T-cell (primary cell): ENCODE measurements at regions of chr4 and their contacts with region 1.

Region 1: GRCh38 chr4:150680651-150681050 is 98.7 kb downstream of the MAB21L2 start:
- DNase-seq: no peak
- ATAC-seq: no peak
- H3K4me3 ChIP-seq: no peak overlapping the region
- H3K4me3 Mint-ChIP-seq: no peak overlapping the region
- H3K27ac ChIP-seq: no peak overlapping the region
- H3K27ac Mint-ChIP-seq: no peak overlapping the region
- H3K4me1 ChIP-seq: no peaks in the 10 kb centered on the region
- H3K4me1 Mint-ChIP-seq: peaks cover 2 to 6% (median 2%) of the 10 kb centered on the region in 3 donors
- H3K27me3 ChIP-seq: no peaks in the 10 kb centered on the region
- H3K27me3 Mint-ChIP-seq: no peaks in the 10 kb centered on the region

Region 2: DNA sequence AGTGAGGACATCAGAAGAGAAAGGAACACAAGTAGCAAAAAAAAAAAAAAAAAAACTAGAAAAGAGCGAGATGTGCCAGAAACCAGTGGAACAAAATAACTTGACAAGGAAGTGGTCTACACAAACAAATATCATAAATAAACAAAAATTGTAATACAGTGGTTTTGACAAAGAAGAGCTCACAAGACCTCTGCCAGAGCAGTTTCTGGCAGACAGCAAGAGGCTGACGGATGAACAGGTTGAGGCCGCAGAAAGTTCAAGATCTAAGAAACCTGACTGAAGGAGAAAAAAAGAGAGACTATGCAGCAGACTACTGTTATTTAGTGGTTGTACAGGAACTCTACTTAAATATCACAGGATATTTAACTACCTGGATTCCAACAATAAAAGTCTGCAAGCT is 32.5 kb before region 1 on chr4:
- CTCF ChIA-PET with region 1: no interaction called
- POLR2A ChIA-PET with region 1: interaction called in 1 of 2 experiments, 11 read pairs
- DNase-seq: no peak
- ATAC-seq: no peak
- H3K4me3 ChIP-seq: no peak overlapping the region
- H3K4me3 Mint-ChIP-seq: no peak overlapping the region
- H3K27ac ChIP-seq: no peak overlapping the region
- H3K27ac Mint-ChIP-seq: no peak overlapping the region
- H3K4me1 ChIP-seq: no peaks in the 10 kb centered on the region
- H3K4me1 Mint-ChIP-seq: peaks cover 0 to 2% (median 0%) of the 10 kb centered on the region in 3 donors
- H3K27me3 ChIP-seq: no peaks in the 10 kb centered on the region
- H3K27me3 Mint-ChIP-seq: no peaks in the 10 kb centered on the region